ENCODE measurements at regions of chr1 and their contacts with region 1.

Region 1: GRCh38 chr1:19651141-19651737 is 7.1 kb downstream of the NBL1 start:
- DNase-seq: no peak
- H3K4me3 ChIP-seq: no peak overlapping the region
- H3K27me3 ChIP-seq: no peaks in the 10 kb centered on the region
- CTCF ChIP-seq: peak; percentile 76

Region 2: GRCh38 chr1:19341201-19342072 is 309.8 kb before region 1 on chr1:
- CTCF ChIA-PET with region 1: interaction called, 13 read pairs
- POLR2A ChIA-PET with region 1: no interaction called
- DNase-seq: no peak
- H3K4me3 ChIP-seq: no peak overlapping the region
- H3K27me3 ChIP-seq: no peaks in the 10 kb centered on the region
- CTCF ChIP-seq: peak; percentile 94

Region 3: GRCh38 chr1:19390901-19391595 is 260.2 kb before region 1 on chr1:
- CTCF ChIA-PET with region 1: interaction called, 11 read pairs
- POLR2A ChIA-PET with region 1: no interaction called
- DNase-seq: peak; percentile 91
- H3K4me3 ChIP-seq: peak overlapping the region; percentile 2; the same call in 1 of the 2 replicates
- H3K27me3 ChIP-seq: no peaks in the 10 kb centered on the region
- CTCF ChIP-seq: peak; percentile 91

Region 4: DNA sequence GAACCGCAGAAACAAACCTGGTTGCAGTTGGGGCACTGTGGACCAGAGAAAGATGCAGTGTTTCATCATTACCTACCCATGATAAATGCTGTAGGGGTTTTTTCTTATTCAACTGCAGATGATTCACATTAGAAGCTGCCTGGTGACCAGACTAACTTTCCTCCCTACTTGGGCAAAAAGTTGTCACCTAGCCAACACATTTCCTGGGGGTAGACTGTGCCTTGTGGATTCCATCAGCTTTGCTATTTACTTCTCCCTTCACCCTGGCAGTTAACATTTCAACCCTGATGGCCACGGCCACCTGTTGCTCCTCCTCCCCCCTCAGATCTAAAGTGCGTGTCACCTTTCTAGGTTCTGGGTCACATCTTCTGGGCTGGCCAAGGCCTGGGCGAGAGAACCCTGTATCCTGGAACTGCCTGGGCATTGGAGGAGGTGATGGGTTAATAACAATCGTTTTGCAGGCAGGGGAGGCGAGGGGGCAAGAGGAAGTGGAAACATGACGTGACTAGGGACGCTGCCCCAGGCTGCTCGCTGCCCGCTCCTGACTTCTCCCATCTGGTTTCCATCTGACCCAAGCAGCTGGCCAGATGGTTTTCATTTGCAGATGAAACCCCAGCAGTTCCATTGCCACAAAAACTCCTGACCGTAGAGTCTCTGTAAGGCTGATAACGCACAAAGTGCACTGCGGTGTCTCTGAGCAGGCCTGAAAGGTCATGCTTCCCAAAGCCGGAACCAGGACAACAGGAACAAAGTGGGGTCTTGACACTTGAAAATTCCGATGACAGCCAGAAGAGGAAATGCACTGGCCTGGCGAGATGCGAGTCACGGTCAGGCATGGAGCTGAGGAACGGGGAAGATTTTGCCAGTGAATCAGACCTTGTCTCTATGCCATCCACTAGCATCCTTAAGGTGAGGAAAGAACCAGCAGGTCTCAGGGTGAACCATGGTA is 202.5 kb before region 1 on chr1:
- CTCF ChIA-PET with region 1: interaction called, 10 read pairs
- POLR2A ChIA-PET with region 1: no interaction called
- DNase-seq: peak; percentile 80
- H3K4me3 ChIP-seq: no peak overlapping the region
- H3K27me3 ChIP-seq: no peaks in the 10 kb centered on the region
- CTCF ChIP-seq: no peak

Region 5: DNA sequence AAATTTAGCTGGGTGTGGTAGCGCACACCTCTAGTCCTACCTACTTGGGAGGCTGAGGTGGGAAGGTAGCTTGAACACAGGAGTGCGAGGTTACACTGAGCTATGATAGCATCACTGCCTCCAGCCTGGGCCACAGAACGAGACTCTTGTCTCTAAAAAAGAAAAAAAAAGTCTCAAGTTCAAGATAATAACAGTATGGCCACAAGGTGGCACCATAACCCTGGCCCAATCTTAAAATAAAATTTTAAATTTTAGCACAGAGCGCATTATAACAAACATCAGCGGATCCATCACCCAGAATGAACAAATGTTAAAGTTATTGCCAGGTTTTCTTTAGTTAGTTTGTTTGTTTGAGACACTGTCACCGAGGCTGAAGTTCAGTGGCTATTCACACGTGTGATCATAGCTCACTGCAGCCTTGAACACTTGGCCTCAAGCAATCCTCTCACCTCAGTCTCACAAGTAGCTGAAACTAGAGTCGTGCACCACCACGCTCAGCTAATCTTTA is 10.5 kb after region 1 on chr1:
- CTCF ChIA-PET with region 1: interaction called, 38 read pairs
- POLR2A ChIA-PET with region 1: interaction called, 3 read pairs
- DNase-seq: no peak
- H3K4me3 ChIP-seq: no peak overlapping the region
- H3K27me3 ChIP-seq: peaks cover 21% of the 10 kb centered on the region
- CTCF ChIP-seq: peak; percentile 65